ENCODE measurements at regions of chr2 and their contacts with region 1.

Region 1: DNA sequence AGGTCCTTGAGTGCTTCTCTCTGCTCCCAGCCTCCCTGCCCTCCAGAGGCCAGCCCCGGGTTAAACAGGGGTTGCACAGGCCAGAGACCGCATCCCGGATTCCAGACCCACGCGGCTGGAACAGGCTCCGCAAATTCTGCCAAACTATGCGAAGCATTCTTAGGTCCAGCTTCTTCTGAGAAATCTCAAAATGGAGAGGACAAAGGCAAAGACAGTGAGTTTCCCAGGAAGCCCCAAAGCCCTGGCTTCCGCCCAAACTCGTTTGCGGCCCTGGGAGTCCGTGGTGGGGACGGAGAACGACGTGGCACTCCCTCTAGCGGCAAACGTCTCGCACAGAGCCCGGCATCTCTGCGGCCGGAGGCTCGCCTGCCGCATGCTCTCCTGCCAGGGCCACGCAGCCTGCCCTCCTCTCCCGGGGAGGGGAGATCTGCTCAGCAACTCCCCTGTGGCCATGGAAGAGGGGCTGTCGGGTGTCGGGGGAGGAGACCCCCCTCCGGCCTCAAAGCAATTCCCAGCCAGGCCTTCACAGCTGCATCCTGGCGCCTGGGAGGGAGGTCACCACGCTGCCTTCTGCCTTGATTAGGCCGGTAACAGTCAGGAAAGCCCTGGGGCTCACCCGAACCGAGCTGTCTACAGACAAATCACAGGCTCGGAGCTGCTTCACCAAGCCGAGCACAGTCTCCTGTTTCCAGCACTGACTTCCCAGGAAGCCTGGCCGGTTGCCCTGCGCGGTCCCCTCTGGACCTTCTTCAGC is 33.4 kb upstream of the KLHL29 start:
- DNase-seq: peak; percentile 94
- H3K4me3 ChIP-seq: peak overlapping the region in 1 of 4 donors; percentile 8
- H3K27ac ChIP-seq: peak overlapping the region; percentile 54 to 65 (median 59)
- H3K4me1 ChIP-seq: peaks cover 0 to 21% (median 13%) of the 10 kb centered on the region in 4 donors
- H3K27me3 ChIP-seq: no peaks in the 10 kb centered on the region
- CTCF ChIP-seq: peak; percentile 63 to 92 (median 70)
- EP300 ChIP-seq: no peak
- POLR2A ChIP-seq: no peak

Region 2: GRCh38 chr2:22355816-22356433 is 995.6 kb before region 1 on chr2:
- intact Hi-C with region 1: loop called (anchors 5 kb)
- DNase-seq: peak; percentile 69
- H3K4me3 ChIP-seq: no peak overlapping the region
- H3K27ac ChIP-seq: no peak overlapping the region
- H3K4me1 ChIP-seq: no peaks in the 10 kb centered on the region
- H3K27me3 ChIP-seq: no peaks in the 10 kb centered on the region
- CTCF ChIP-seq: peak; percentile 34 to 88 (median 68)
- EP300 ChIP-seq: no peak
- POLR2A ChIP-seq: no peak

Region 3: DNA sequence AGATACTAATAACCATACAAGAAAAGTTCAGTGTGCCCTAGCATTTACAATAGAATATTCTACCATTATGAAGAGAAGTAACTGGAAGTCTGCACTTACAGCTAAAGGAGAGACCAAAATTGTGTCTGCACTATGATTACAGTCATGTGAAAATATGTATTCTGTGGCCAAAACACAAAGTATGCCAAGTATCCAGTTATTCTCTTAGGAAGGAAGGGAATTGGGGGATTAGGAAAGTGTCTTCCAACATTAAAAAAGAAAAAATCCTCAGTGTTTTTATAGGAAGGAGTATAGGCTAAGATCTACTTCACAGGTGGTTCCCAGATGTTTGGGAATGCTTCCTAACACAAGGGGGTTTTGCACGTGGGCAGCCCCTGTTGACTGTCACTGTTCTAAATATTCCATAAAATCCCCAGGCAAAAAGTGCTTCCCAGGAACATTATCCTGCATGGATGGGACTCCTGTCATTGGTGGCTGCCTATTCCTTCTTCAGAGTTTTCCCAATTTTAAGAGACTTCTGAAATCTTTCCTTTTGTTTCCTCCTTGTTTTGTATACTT is 146.8 kb before region 1 on chr2:
- intact Hi-C with region 1: loop called (anchors 5 kb)
- DNase-seq: no peak
- H3K4me3 ChIP-seq: no peak overlapping the region
- H3K27ac ChIP-seq: no peak overlapping the region
- H3K4me1 ChIP-seq: peaks cover 0 to 6% (median 0%) of the 10 kb centered on the region in 4 donors
- H3K27me3 ChIP-seq: no peaks in the 10 kb centered on the region
- CTCF ChIP-seq: no peak
- EP300 ChIP-seq: no peak
- POLR2A ChIP-seq: no peak

Region 4: DNA sequence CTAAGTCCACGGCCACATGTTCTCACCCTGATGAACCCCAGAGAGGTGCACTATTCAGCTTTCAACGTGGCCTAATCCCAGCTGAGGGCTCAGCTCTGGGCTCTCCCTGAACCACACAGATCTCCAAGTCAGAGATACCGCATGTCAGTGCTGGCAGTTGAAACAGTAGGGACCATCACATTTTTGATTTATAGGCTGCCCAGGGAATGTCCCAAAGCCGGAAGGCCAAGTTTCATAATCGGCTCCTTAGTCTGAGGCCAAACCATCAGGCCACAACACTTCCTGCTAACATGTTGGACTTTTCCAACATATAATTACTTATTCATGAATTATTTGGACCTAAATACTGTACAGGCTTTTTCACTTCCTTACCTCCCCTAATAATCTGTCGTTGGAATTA is 58.5 kb before region 1 on chr2:
- intact Hi-C with region 1: loop called (anchors 5 kb)
- DNase-seq: no peak
- H3K4me3 ChIP-seq: no peak overlapping the region
- H3K27ac ChIP-seq: peak overlapping the region in 1 of 4 donors; percentile 43
- H3K4me1 ChIP-seq: peaks cover 0 to 30% (median 20%) of the 10 kb centered on the region in 4 donors
- H3K27me3 ChIP-seq: no peaks in the 10 kb centered on the region
- CTCF ChIP-seq: no peak
- EP300 ChIP-seq: no peak
- POLR2A ChIP-seq: no peak

Measured in sigmoid colon (tissue), 7 donors.